Gastrocnemius medialis (tissue), 4 donors: ENCODE measurements at regions of chr17 and their contacts with region 1.

Region 1: DNA sequence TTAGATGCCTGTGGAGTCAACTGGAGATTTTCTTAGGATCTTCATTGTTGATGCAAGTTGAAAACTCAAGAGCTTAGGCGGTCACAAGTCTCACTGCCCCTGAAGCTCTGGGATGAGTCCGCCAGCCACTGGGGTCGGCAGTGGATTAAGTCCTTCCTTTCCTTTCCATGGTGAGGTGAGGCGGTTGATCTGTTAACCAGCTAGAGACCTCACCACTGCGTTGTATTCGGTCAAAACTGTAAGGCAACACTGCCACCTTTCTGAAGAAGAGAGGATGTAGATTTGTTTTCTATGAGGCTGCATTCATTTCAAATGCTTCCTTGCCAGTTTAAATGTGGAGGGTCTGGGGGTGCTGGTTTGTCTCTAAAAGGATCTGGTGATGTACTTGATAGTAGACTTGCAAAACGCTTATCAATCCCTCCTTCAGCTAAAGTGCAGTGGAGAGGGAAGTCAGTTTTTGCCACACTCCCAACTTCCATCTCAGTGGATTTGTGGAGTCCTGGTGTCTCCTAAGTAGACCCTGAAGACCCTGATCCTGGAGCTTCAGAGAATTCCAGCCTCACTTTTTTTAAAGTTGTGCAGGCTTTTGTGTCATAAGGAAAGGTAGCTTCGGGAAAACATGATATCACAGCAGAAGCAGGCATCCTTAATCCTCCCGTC is 1.7 kb downstream of the MYOCD start:
- DNase-seq: no peak
- ATAC-seq: no peak
- H3K4me3 ChIP-seq: peak overlapping the region in 1 of 4 donors; percentile 52
- H3K27ac ChIP-seq: peak overlapping the region in 2 of 4 donors; percentile 21 to 52
- H3K4me1 ChIP-seq: no peaks in the 10 kb centered on the region
- H3K27me3 ChIP-seq: peaks cover 16 to 30% (median 28%) of the 10 kb centered on the region in 3 donors
- CTCF ChIP-seq: peak in 1 of 5 experiments; percentile 21
- POLR2A ChIP-seq: no peak

Region 2: DNA sequence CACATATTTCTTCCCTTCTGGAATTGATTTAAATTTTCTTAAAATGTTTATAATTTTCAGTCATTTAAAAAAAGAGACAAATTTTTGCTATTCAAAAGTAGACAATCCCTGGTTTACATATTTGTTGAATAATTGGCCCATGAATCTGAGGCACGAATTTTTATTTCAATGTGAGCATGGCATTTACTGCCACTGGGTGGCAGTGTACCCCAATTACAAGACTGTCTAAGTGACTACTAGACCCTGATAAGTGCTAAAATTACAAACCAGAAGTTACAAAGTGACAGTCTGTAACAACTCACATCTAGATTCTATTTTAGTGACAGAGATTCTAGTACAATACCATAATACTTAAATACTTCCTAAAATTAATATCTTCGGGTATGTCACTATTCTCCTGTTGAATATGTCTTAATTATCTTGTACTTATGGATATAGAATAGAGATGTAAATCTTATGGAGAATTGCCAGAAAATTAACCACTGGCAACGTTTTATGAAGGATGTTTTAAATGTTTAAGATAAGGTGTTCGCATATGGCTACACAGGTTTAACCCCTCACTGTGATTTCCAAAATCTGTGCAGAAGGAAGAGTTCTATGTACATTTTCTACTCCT is 410.9 kb before region 1 on chr17:
- in situ Hi-C with region 1: no loop called
- intact Hi-C with region 1: loop called (anchors 5 kb)
- DNase-seq: no peak
- ATAC-seq: no peak
- H3K4me3 ChIP-seq: no peak overlapping the region
- H3K27ac ChIP-seq: no peak overlapping the region
- H3K4me1 ChIP-seq: no peaks in the 10 kb centered on the region
- H3K27me3 ChIP-seq: peaks cover 0 to 2% (median 0%) of the 10 kb centered on the region in 3 donors
- CTCF ChIP-seq: peak in 3 of 5 experiments; percentile 10 to 57 (median 44)
- POLR2A ChIP-seq: no peak

Region 3: DNA sequence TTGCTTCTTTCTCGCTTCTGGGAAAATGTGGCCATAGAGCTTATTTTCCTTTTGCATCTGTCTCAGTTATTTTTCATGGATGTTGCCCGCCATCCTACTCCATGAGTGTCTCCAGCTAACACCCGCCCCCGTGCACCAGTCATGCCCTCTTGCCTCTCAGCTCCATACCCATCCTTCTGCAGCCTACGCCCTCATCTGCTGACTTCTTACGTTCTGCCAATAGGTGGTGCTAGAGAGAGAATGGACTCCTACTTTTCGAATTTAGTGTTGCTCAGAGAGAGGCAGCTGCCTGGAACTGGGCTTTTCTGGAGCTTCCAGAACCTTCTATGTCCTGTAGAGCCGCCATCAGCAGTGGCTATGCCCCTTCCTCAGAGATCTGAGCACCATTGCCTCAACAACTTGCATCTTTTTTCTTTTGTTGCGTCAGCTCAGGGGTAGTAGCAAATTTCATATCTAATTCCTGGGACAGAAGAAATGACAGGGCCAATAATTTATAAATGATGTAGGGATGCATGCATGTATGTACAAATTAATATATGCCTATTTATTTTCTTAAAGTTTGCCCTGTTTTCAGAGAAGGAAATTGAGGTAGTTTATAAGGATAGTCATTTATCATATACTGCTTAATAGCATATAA is 121.4 kb before region 1 on chr17:
- in situ Hi-C with region 1: loop called in 1 of 4 experiments (anchors 25 kb)
- intact Hi-C with region 1: no loop called
- DNase-seq: no peak
- ATAC-seq: no peak
- H3K4me3 ChIP-seq: no peak overlapping the region
- H3K27ac ChIP-seq: no peak overlapping the region
- H3K4me1 ChIP-seq: no peaks in the 10 kb centered on the region
- H3K27me3 ChIP-seq: no peaks in the 10 kb centered on the region
- CTCF ChIP-seq: peak in 3 of 5 experiments; percentile 26 to 55 (median 45)
- POLR2A ChIP-seq: no peak

Region 4: GRCh38 chr17:12712941-12713340 is 45.5 kb after region 1 on chr17:
- in situ Hi-C with region 1: no loop called
- intact Hi-C with region 1: no loop called
- DNase-seq: no peak
- ATAC-seq: no peak
- H3K4me3 ChIP-seq: no peak overlapping the region
- H3K27ac ChIP-seq: peak overlapping the region in 2 of 4 donors; percentile 39 to 57
- H3K4me1 ChIP-seq: no peaks in the 10 kb centered on the region
- H3K27me3 ChIP-seq: no peaks in the 10 kb centered on the region
- CTCF ChIP-seq: no peak
- POLR2A ChIP-seq: no peak

Region 5: GRCh38 chr17:12806630-12807029 is 139.2 kb after region 1 on chr17:
- in situ Hi-C with region 1: no loop called
- intact Hi-C with region 1: no loop called
- DNase-seq: no peak
- ATAC-seq: no peak
- H3K4me3 ChIP-seq: no peak overlapping the region
- H3K27ac ChIP-seq: no peak overlapping the region
- H3K4me1 ChIP-seq: peaks cover 0 to 5% of the 10 kb centered on the region in 2 donors
- H3K27me3 ChIP-seq: no peaks in the 10 kb centered on the region
- CTCF ChIP-seq: no peak
- POLR2A ChIP-seq: no peak

Region 6: GRCh38 chr17:12859520-12859919 is 192.1 kb after region 1 on chr17:
- in situ Hi-C with region 1: no loop called
- intact Hi-C with region 1: no loop called
- DNase-seq: no peak
- ATAC-seq: peak in 1 of 2 donors; percentile 68
- H3K4me3 ChIP-seq: no peak overlapping the region
- H3K27ac ChIP-seq: peak overlapping the region in 1 of 4 donors; percentile 29
- H3K4me1 ChIP-seq: no peaks in the 10 kb centered on the region
- H3K27me3 ChIP-seq: no peaks in the 10 kb centered on the region
- CTCF ChIP-seq: no peak
- POLR2A ChIP-seq: no peak